Dendritic cell treated with granulocyte-macrophage colony-stimulating factor and Interleukin-4, amounts not matched to agents 40 ng/mL and 50 ng/mL, for 4 days (primary cell): ENCODE measurements at regions of chr11 and their contacts with region 1.

Region 1: GRCh38 chr11:15852179-15852578 is 504.2 kb downstream of the SOX6 start:
- H3K4me3 Mint-ChIP-seq: no peak overlapping the region
- H3K27ac Mint-ChIP-seq: peak overlapping the region; percentile 78
- H3K4me1 Mint-ChIP-seq: peaks cover 41% of the 10 kb centered on the region
- H3K27me3 Mint-ChIP-seq: peaks cover 18% of the 10 kb centered on the region

Region 2: DNA sequence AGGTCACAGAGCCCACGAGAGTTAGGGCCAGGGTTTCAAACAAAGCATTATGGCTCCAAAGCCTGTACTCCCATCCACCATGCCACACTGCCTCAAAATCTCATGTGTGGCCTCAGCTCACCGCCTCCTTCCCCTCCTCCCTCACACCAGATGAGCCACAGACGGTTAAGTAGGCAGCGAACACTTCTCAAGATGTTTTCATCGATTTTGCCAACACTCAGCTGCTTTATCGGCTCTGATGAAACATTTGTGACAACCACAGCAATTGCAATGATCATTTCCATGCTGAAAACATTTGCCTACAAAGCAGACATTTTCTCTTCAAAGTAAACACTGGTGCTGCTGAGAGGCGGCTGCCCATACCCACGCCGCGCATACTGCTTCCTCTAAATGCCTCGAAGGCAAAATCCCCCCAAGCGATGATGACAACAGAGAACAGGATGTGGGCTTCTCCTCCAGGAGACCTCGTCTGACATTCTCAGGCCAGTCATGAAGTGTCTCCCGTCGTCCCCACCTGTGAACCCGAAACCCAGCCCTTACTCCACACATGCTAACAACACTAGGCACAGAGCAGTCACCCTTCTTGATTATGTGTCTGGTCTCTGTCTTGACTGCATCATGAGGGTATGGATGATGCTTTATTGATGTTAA is 95.0 kb before region 1 on chr11:
- intact Hi-C with region 1: no loop called
- H3K4me3 Mint-ChIP-seq: no peak overlapping the region
- H3K27ac Mint-ChIP-seq: peak overlapping the region; percentile 9
- H3K4me1 Mint-ChIP-seq: peaks cover 38% of the 10 kb centered on the region
- H3K27me3 Mint-ChIP-seq: peaks cover 38% of the 10 kb centered on the region

Region 3: GRCh38 chr11:15819679-15820286 is 32.4 kb before region 1 on chr11:
- intact Hi-C with region 1: no loop called
- H3K4me3 Mint-ChIP-seq: no peak overlapping the region
- H3K27ac Mint-ChIP-seq: peak overlapping the region; percentile 91
- H3K4me1 Mint-ChIP-seq: peaks cover 63% of the 10 kb centered on the region
- H3K27me3 Mint-ChIP-seq: no peaks in the 10 kb centered on the region

Region 4: DNA sequence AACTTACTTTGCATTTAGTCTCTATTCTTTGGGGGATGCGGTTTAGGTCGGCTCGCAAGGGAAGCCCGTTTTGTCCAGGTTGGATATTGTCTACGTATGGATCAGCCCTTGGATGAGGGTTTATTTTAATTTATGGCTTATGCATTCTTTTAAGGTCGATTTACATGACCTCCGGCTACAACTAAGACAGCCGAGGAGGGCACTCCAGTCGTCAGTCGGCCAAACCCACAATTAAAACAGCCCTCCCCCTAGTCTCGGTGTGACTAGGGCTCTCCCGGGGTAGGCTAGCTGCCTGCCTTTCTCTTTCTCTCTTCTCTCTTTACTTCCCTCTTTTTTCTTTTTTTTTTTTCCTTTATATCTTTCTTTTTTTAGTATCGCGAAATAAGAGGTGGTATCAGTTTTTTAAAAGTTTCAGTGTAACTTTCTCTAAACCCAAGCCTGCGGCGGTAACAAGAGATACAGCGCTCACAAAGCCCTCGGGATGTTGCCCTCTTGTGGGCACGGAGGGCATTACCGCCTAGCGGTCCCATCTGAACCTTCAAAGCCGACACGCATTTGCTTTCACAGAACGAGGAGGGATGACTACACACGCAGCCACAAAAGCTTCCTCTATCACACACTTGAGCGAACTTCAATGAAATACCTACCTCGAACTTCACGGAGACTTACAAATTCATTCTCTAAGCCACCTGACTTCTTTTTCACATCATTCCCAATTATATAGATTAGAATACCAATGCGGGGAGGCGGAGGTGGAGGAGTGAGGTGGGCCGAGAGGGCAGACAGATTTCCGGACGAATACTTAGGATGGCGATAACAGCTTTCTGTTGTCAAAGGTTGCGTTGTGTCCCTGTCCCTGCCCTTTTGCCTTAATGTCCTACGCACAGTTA is 754.0 kb after region 1 on chr11:
- intact Hi-C with region 1: loop called (anchors 5 kb)
- H3K4me3 Mint-ChIP-seq: peak overlapping the region; percentile 72
- H3K27ac Mint-ChIP-seq: peak overlapping the region; percentile 28
- H3K4me1 Mint-ChIP-seq: peaks cover 23% of the 10 kb centered on the region
- H3K27me3 Mint-ChIP-seq: peaks cover 31% of the 10 kb centered on the region